Activated CD4-positive, alpha-beta memory T cell treated with anti-CD3 and anti-CD28 coated beads for 36 hours (primary cell): ENCODE measurements at regions of chr14 and their contacts with region 1.

Region 1: GRCh38 chr14:54669721-54670561 is 103.0 kb downstream of the SAMD4A start:
- DNase-seq: peak; percentile 49
- H3K4me3 Mint-ChIP-seq: no peak overlapping the region
- H3K27ac Mint-ChIP-seq: peak overlapping the region; percentile 26
- H3K4me1 Mint-ChIP-seq: peaks cover 43% of the 10 kb centered on the region
- H3K27me3 Mint-ChIP-seq: peaks cover 11% of the 10 kb centered on the region

Region 2: DNA sequence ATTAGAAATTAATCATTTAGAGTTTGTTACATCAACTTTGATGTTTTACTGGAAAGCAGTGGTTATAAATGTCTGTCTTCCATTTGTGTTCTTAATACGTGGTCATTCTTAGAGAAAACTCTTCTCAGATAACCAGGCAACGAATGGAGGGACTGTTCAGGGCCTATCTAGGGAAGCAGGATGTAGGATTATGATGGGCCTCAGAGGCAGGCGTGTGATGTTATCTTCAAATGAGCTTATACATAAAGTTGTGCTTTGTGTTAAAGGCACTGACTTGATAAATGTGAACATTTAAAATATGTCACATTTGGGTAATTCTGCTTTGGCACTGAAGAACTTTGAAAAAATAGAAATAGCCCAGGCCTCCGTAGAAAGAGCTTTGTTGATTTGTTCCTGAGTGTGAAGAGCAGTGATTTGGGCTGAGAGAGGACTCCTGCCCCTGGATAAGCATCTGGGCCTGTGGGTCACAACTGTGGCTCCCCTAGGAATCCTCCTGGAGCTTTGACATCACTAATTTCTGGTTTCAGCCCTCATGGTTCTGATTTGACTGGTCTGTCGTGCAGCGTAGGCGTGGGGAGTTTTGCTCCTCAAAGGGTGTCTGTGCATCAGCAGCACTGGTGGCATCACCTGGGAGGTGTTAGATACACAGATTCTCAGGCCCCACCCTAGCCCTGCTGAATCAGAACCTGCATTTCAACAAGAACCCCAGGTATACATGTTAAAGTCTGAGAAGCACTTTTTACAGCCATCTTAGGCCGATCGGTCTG is 47.6 kb before region 1 on chr14:
- CTCF ChIA-PET with region 1: interaction called, 7 read pairs
- POLR2A ChIA-PET with region 1: interaction called, 5 read pairs
- intact Hi-C with region 1: loop called (anchors 1 kb)
- DNase-seq: peak; percentile 89
- H3K4me3 Mint-ChIP-seq: no peak overlapping the region
- H3K27ac Mint-ChIP-seq: no peak overlapping the region
- H3K4me1 Mint-ChIP-seq: peaks cover 37% of the 10 kb centered on the region
- H3K27me3 Mint-ChIP-seq: no peaks in the 10 kb centered on the region

Region 3: GRCh38 chr14:54691525-54692283 is 21.8 kb after region 1 on chr14:
- CTCF ChIA-PET with region 1: interaction called, 18 read pairs
- POLR2A ChIA-PET with region 1: no interaction called
- intact Hi-C with region 1: loop called (anchors 2 kb)
- DNase-seq: peak; percentile 75
- H3K4me3 Mint-ChIP-seq: no peak overlapping the region
- H3K27ac Mint-ChIP-seq: no peak overlapping the region
- H3K4me1 Mint-ChIP-seq: peaks cover 15% of the 10 kb centered on the region
- H3K27me3 Mint-ChIP-seq: peaks cover 8% of the 10 kb centered on the region

Region 4: DNA sequence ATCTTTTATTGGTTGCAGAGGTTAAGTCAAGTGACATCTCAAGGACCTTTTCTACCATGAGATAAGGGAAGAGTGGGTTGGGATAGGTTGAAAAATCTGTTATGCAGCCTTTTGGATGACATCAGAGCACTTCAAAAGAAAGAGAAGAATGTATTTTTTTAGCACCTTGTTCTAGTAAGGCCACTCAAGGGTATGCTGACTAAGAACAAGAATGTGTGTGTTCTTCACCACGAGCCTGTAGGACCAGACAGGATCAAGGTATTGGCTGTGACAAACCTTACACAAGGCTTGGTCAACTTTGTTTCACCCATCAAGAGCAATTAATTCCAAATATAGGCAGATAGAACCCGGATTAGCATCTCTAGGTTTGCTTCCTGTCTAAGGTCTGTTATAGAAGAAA is 39.5 kb after region 1 on chr14:
- CTCF ChIA-PET with region 1: no interaction called
- POLR2A ChIA-PET with region 1: no interaction called
- intact Hi-C with region 1: loop called (anchors 5 kb)
- DNase-seq: no peak
- H3K4me3 Mint-ChIP-seq: no peak overlapping the region
- H3K27ac Mint-ChIP-seq: no peak overlapping the region
- H3K4me1 Mint-ChIP-seq: peaks cover 17% of the 10 kb centered on the region
- H3K27me3 Mint-ChIP-seq: no peaks in the 10 kb centered on the region

Region 5: DNA sequence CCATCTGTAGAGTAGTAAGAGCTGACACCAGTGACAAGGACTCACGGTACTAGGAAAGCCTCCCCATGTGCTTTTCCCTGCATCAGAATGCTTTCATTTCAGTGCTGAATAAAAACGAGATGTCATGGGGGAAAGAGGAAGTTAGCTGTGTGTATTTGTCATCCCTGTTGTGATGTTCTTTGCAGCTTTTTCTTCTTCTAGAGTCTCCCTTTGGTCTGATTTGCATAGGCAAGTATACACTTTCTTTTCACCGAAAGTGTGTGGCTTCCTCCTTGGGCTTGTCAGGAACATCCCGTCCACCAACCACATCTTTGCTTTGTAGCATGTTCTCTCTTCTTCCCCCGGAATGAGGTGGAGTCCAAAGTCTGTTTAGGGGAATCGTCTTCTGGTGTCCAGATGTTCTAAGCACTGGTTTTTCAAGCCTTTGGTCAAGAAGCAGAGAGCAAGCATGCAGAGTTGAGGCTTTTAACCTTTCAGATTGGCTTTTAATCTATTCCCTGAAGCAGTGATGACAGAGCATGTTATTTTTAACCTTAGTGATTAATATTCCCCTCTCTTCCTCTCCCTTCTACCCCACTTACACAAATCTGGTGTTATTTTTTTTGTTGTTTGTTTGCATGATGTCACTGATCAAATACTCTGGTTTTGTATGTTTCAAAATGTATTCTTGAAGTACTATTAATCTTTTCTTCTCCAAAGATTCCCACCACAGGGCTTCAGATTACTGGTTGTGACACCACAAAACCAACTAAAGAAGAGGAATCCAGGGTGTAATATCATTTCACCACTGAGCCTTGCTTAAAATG is 60.4 kb after region 1 on chr14:
- CTCF ChIA-PET with region 1: interaction called, 3 read pairs
- POLR2A ChIA-PET with region 1: no interaction called
- intact Hi-C with region 1: loop called (anchors 1 kb)
- DNase-seq: peak; percentile 63
- H3K4me3 Mint-ChIP-seq: peak overlapping the region; percentile 38
- H3K27ac Mint-ChIP-seq: peak overlapping the region; percentile 90
- H3K4me1 Mint-ChIP-seq: peaks cover 38% of the 10 kb centered on the region
- H3K27me3 Mint-ChIP-seq: peaks cover 12% of the 10 kb centered on the region